ENCODE measurements at regions of chr14 and their contacts with region 1.

Region 1: DNA sequence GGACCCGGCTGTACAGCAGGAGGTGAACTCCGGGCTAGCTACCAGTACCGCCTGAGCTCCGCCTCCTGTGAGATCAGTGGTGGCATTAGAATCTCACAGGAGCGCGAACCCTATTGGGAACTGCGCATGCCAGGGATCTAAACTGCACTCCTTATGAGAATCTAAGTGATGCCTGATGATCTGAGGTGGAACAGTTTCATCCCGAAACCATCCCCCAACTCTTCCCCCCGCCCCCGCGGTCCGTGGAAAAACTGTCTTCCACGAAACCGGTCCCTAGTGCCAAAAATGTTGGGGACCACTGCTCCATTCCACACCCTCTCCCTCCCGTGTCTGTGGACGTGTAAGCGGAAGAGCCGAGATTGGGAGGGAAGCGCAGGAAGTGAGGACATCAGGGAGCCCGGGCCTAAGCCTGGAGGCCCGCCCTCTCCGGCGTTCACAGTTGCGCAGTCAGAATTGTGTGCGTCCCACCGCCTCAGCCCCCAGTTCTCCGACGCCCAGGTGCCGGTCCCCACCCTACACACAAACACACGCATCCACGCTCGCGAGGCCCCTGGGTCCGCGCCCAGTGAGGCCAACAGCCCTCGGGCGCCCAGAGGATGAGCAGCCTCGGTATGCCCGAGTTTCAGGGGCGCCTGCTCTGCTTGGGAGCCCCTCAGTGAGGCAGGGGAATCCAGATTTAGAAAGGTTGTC is 1.8 kb upstream of the RNASE4 start:
- DNase-seq: peak; percentile 63 to 94 (median 80)
- ATAC-seq: peak; percentile 65
- H3K4me3 ChIP-seq: peak overlapping the region; percentile 67 to 93
- H3K4me3 Mint-ChIP-seq: no peak overlapping the region
- H3K27ac ChIP-seq: peak overlapping the region; percentile 80 to 90
- H3K27ac Mint-ChIP-seq: no peak overlapping the region
- H3K4me1 ChIP-seq: peaks cover 24% of the 10 kb centered on the region
- H3K4me1 Mint-ChIP-seq: peaks cover 29% of the 10 kb centered on the region
- H3K27me3 ChIP-seq: no peaks in the 10 kb centered on the region
- H3K27me3 Mint-ChIP-seq: no peaks in the 10 kb centered on the region
- CTCF ChIP-seq: no peak

Region 2: DNA sequence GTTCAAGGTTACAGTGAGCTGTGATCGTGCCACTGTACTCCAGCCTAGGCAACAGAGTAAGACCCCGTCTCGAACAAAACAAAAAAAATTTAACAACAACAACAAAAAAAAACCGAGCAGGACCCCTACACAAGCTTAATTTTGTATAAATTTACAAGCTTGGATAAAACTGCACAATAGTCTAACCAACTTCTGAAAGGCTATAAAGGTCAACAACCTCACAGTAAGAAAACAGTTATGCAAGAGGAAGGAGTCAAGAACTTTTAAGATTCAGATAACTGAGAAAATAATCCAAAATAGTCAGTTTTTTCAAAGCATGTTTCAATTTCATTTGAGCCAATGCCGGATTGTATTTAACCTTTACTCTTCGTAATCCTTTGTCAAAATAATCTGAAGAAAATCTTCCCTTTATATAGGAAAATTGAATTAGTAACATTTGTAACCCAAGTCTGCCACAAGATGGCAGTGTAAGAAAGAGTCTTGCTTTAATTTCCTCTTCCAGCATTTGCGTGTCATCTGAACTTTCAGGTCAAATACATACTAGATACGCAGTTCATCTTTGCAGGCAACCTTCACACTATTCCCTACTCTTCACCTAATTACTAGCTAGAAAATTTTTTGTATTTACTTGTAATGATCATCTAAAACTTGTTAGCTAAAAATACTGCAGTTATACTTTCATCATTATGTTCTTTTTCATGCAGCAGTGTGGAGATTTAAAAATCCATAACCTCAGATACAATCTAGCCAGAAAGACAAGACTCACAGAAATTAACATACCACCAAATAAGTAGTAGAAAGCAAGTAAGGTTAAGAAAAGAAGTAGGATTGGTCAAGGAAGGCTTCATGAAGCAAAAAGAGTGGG is 355.3 kb before region 1 on chr14:
- CTCF ChIA-PET with region 1: interaction called, 14 read pairs
- POLR2A ChIA-PET with region 1: interaction called, 8 read pairs
- intact Hi-C with region 1: loop called in 1 of 2 experiments (anchors 2 kb)
- DNase-seq: peak in 3 of 9 experiments; percentile 35 to 83 (median 76)
- ATAC-seq: peak; percentile 62
- H3K4me3 ChIP-seq: no peak overlapping the region
- H3K4me3 Mint-ChIP-seq: no peak overlapping the region
- H3K27ac ChIP-seq: no peak overlapping the region
- H3K27ac Mint-ChIP-seq: peak overlapping the region; percentile 62
- H3K4me1 ChIP-seq: peaks cover 6% of the 10 kb centered on the region
- H3K4me1 Mint-ChIP-seq: peaks cover 26% of the 10 kb centered on the region
- H3K27me3 ChIP-seq: no peaks in the 10 kb centered on the region
- H3K27me3 Mint-ChIP-seq: no peaks in the 10 kb centered on the region
- CTCF ChIP-seq: peak; percentile 98

Region 3: DNA sequence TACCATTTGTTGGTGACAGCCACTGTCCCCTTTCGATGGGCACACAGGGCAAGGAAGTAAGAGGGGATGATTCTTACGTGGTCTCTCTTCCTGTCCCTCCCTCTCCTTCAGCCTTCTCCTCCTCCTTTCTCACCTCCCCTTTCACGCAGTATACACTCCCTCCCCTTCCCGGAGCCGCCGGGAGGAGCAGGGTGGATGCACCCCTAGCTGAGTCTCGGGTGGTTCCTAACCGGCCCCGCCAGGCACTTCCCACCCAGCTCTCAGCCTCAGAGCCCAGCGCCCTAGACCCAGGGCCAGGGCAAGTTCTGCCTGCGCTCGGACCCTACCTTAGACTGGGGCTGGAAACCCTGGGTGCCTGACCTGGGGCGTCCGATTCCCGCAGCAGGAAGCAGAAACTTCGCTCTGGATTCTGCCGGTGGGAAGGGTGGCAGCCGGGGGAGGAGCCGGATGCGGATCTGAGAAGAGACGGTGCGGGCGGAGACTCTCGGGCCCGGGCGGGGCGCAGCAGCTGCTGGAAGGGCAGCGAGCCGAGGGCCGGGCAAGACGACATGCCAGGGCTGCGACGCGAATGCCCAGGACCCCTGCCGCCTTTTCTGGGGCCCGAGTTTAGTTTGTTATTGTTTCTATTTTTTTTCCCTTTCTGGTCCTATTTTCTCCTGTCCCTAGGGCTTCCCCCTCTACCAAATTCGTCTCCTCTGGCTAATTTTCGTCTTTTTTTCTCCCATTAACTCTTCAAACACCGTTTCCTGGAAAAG is 269.4 kb before region 1 on chr14 and contains the start of gene TEP1:
- CTCF ChIA-PET with region 1: interaction called, 3 read pairs
- POLR2A ChIA-PET with region 1: interaction called, 5 read pairs
- intact Hi-C with region 1: loop called (anchors 1 to 2 kb)
- DNase-seq: peak; percentile 33 to 84 (median 74)
- ATAC-seq: peak; percentile 63
- H3K4me3 ChIP-seq: peak within 1 kb of the TSS; percentile 66 to 97
- H3K4me3 Mint-ChIP-seq: peak within 1 kb of the TSS; percentile 91
- H3K27ac ChIP-seq: peak within 1 kb of the TSS; percentile 80 to 85
- H3K27ac Mint-ChIP-seq: peak within 1 kb of the TSS; percentile 93
- H3K4me1 ChIP-seq: peaks cover 31% of the 10 kb centered on the region
- H3K4me1 Mint-ChIP-seq: peaks cover 48% of the 10 kb centered on the region
- H3K27me3 ChIP-seq: no peaks in the 10 kb centered on the region
- H3K27me3 Mint-ChIP-seq: no peaks in the 10 kb centered on the region
- CTCF ChIP-seq: no peak
- total RNA-seq, gene TEP1: 16.9 to 20.2 TPM

Region 4: GRCh38 chr14:20530771-20531571 is 151.6 kb before region 1 on chr14:
- CTCF ChIA-PET with region 1: no interaction called
- POLR2A ChIA-PET with region 1: no interaction called
- intact Hi-C with region 1: loop called in 1 of 2 experiments (anchors 2 kb)
- DNase-seq: peak; percentile 37 to 83 (median 72)
- ATAC-seq: peak; percentile 76
- H3K4me3 ChIP-seq: no peak overlapping the region
- H3K4me3 Mint-ChIP-seq: peak overlapping the region; percentile 48
- H3K27ac ChIP-seq: no peak overlapping the region
- H3K27ac Mint-ChIP-seq: no peak overlapping the region
- H3K4me1 ChIP-seq: no peaks in the 10 kb centered on the region
- H3K4me1 Mint-ChIP-seq: peaks cover 7% of the 10 kb centered on the region
- H3K27me3 ChIP-seq: peaks cover 0 to 2% of the 10 kb centered on the region in 2 experiments
- H3K27me3 Mint-ChIP-seq: peaks cover 8% of the 10 kb centered on the region
- CTCF ChIP-seq: peak; percentile 79

Region 5: GRCh38 chr14:20662968-20663732 is 19.4 kb before region 1 on chr14:
- CTCF ChIA-PET with region 1: interaction called, 188 read pairs
- POLR2A ChIA-PET with region 1: interaction called, 8 read pairs
- intact Hi-C with region 1: loop called in 1 of 2 experiments (anchors 2 kb)
- DNase-seq: peak; percentile 57 to 89 (median 73)
- ATAC-seq: peak; percentile 90
- H3K4me3 ChIP-seq: peak overlapping the region; percentile 34 to 50
- H3K4me3 Mint-ChIP-seq: peak overlapping the region; percentile 77
- H3K27ac ChIP-seq: no peak overlapping the region
- H3K27ac Mint-ChIP-seq: no peak overlapping the region
- H3K4me1 ChIP-seq: peaks cover 14% of the 10 kb centered on the region
- H3K4me1 Mint-ChIP-seq: peaks cover 27% of the 10 kb centered on the region
- H3K27me3 ChIP-seq: no peaks in the 10 kb centered on the region
- H3K27me3 Mint-ChIP-seq: peaks cover 30% of the 10 kb centered on the region
- CTCF ChIP-seq: peak; percentile 54

Region 6: DNA sequence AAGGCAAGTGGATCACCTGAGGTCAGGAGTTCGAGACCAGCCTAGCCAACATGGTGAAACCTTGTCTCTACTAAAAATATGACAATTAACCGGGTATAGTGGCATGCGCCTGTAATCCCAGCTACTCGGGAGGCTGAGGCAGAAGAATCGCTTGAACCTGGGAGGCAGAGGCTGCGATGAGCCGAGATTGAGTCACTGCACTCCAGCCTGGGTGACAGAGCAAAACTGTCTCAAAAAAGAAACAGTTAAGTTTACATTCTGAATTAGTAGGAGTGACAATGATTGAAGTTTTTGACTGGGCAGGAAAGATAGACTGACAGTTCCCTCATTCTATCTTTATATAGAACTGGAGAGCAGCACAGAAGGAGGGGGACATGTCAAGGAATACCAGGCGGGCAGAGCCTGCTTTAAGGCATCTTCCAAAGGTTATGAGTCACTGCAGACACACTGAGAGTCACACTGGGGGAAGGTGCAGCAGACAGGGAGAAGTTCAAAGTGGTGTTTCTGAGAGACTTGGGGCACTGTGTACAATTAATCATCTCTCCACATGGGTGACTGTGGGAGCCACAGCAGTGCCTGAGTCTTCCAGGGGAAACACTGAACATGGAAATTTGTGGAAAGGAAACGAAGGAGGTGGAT is 165.9 kb after region 1 on chr14:
- CTCF ChIA-PET with region 1: no interaction called
- POLR2A ChIA-PET with region 1: no interaction called
- intact Hi-C with region 1: no loop called
- DNase-seq: no peak
- ATAC-seq: no peak
- H3K4me3 ChIP-seq: no peak overlapping the region
- H3K4me3 Mint-ChIP-seq: no peak overlapping the region
- H3K27ac ChIP-seq: no peak overlapping the region
- H3K27ac Mint-ChIP-seq: no peak overlapping the region
- H3K4me1 ChIP-seq: no peaks in the 10 kb centered on the region
- H3K4me1 Mint-ChIP-seq: no peaks in the 10 kb centered on the region
- H3K27me3 ChIP-seq: no peaks in the 10 kb centered on the region
- H3K27me3 Mint-ChIP-seq: peaks cover 6% of the 10 kb centered on the region
- CTCF ChIP-seq: no peak

Region 7: GRCh38 chr14:21220874-21221477 is 538.4 kb after region 1 on chr14:
- CTCF ChIA-PET with region 1: no interaction called
- POLR2A ChIA-PET with region 1: no interaction called
- intact Hi-C with region 1: no loop called
- DNase-seq: no peak
- ATAC-seq: peak; percentile 33
- H3K4me3 ChIP-seq: no peak overlapping the region
- H3K4me3 Mint-ChIP-seq: peak overlapping the region; percentile 27
- H3K27ac ChIP-seq: peak overlapping the region in 1 of 2 experiments; percentile 9
- H3K27ac Mint-ChIP-seq: peak overlapping the region; percentile 83
- H3K4me1 ChIP-seq: peaks cover 46% of the 10 kb centered on the region
- H3K4me1 Mint-ChIP-seq: peaks cover 72% of the 10 kb centered on the region
- H3K27me3 ChIP-seq: no peaks in the 10 kb centered on the region
- H3K27me3 Mint-ChIP-seq: no peaks in the 10 kb centered on the region
- CTCF ChIP-seq: no peak